Stomach (tissue), 19 donors: ENCODE measurements at regions of chr15 and their contacts with region 1.

Region 1: GRCh38 chr15:33846867-33847266 is 121.4 kb upstream of the CHRM5 start:
- DNase-seq: no peak
- H3K4me3 ChIP-seq: no peak overlapping the region
- H3K27ac ChIP-seq: no peak overlapping the region
- H3K4me1 ChIP-seq: no peaks in the 10 kb centered on the region
- H3K27me3 ChIP-seq: no peaks in the 10 kb centered on the region
- CTCF ChIP-seq: no peak
- EP300 ChIP-seq: no peak
- POLR2A ChIP-seq: no peak

Region 2: GRCh38 chr15:33788906-33789540 is 57.8 kb before region 1 on chr15:
- intact Hi-C with region 1: loop called (anchors 10 kb)
- DNase-seq: peak in 1 of 2 donors; percentile 24
- H3K4me3 ChIP-seq: no peak overlapping the region
- H3K27ac ChIP-seq: no peak overlapping the region
- H3K4me1 ChIP-seq: no peaks in the 10 kb centered on the region
- H3K27me3 ChIP-seq: no peaks in the 10 kb centered on the region
- CTCF ChIP-seq: no peak
- EP300 ChIP-seq: no peak
- POLR2A ChIP-seq: no peak